Tibial artery (tissue), 4 donors: ENCODE measurements at regions of chr11 and their contacts with region 1.

Region 1: DNA sequence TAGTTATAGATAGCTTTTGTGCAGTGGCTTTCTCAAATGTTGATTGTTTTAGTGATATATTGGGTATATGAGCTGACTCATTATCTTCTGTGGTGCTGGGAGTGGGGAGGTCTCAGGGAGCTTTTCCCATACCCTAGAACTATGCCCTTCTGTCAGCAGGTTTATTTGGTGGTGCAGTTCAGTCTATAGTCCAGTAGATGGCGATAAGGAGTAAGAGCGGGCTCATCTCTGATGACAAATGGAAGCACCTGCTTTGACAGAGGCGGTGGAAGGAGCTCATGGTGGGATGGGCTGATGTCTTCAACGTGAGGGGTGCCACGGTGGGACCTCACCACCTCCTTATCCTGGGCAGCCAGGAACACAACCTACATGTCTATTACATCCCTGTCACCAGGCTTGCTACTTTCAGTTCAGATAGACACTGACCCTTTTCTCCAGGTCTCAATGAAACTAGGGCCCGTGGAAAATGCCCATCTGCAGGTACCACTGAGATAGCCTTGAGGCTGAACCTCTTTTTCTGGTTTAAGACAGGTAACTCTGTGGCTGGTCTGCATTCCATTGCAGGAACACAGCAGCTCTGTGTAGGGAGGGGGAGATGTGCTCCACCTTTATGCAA is 13.0 kb upstream of the OR6A2 start:
- DNase-seq: no peak
- H3K4me3 ChIP-seq: no peak overlapping the region
- H3K27ac ChIP-seq: no peak overlapping the region
- H3K4me1 ChIP-seq: no peaks in the 10 kb centered on the region
- H3K27me3 ChIP-seq: no peaks in the 10 kb centered on the region
- CTCF ChIP-seq: peak; percentile 54 to 79

Region 2: DNA sequence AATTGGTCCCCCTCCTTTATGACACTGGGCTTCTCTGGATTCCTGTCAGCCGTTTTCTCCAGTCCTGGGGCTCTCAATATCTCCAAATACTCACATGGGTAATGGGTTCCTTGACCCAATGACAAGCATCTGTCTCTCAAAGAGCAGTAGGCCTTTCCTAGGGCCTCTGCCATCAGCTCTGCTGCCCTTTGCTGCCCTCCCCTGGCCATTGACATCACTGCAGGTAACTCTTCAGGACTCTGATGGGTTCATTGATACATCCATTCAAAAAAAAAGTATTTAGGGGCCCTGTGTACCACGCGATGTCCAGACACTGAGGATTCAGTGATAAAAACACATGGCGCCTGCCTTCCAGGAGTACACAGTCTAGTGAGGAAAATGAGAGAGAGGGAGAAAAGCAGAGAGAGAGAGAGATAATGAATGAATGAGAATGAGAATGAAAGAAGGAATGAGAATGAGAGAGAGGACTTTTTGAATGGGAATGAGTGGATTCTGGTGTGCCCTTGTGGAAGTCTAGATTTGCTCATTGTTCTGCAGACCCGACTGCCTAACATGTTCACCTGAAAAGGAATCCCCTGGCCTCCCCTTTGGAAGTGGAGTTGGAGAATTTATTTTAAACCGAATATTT is 630.2 kb after region 1 on chr11:
- intact Hi-C with region 1: loop called (anchors 2 kb)
- DNase-seq: peak; percentile 72 to 78
- H3K4me3 ChIP-seq: no peak overlapping the region
- H3K27ac ChIP-seq: no peak overlapping the region
- H3K4me1 ChIP-seq: no peaks in the 10 kb centered on the region
- H3K27me3 ChIP-seq: no peaks in the 10 kb centered on the region
- CTCF ChIP-seq: peak; percentile 64 to 80